Activated B cell treated with CpG ODN at 0.5 μM for 24 hours (primary cell): ENCODE measurements at regions of chrX and their contacts with region 1.

Region 1: GRCh38 chrX:136251041-136251991 is at the start of gene MAP7D3:
- DNase-seq: peak; percentile 61
- ATAC-seq: peak; percentile 93
- H3K4me3 Mint-ChIP-seq: peak within 1 kb of the TSS; percentile 86
- H3K27ac Mint-ChIP-seq: peak within 1 kb of the TSS; percentile 81
- H3K4me1 Mint-ChIP-seq: peaks cover 6% of the 10 kb centered on the region
- H3K27me3 Mint-ChIP-seq: no peaks in the 10 kb centered on the region
- CTCF ChIP-seq: no peak
- total RNA-seq, gene MAP7D3: 11.2 and 12.2 TPM in 2 replicates

Region 2: GRCh38 chrX:135985141-135985972 is 266.0 kb before region 1 on chrX and contains the start of gene SLC9A6:
- CTCF ChIA-PET with region 1: no interaction called
- POLR2A ChIA-PET with region 1: no interaction called
- intact Hi-C with region 1: loop called (anchors 1 kb)
- DNase-seq: peak; percentile 64
- ATAC-seq: peak; percentile 93
- H3K4me3 Mint-ChIP-seq: peak within 1 kb of the TSS; percentile 91
- H3K27ac Mint-ChIP-seq: peak within 1 kb of the TSS; percentile 84
- H3K4me1 Mint-ChIP-seq: peaks cover 43% of the 10 kb centered on the region
- H3K27me3 Mint-ChIP-seq: no peaks in the 10 kb centered on the region
- CTCF ChIP-seq: no peak
- total RNA-seq, gene SLC9A6: 13.5 and 16.7 TPM in 2 replicates

Region 3: DNA sequence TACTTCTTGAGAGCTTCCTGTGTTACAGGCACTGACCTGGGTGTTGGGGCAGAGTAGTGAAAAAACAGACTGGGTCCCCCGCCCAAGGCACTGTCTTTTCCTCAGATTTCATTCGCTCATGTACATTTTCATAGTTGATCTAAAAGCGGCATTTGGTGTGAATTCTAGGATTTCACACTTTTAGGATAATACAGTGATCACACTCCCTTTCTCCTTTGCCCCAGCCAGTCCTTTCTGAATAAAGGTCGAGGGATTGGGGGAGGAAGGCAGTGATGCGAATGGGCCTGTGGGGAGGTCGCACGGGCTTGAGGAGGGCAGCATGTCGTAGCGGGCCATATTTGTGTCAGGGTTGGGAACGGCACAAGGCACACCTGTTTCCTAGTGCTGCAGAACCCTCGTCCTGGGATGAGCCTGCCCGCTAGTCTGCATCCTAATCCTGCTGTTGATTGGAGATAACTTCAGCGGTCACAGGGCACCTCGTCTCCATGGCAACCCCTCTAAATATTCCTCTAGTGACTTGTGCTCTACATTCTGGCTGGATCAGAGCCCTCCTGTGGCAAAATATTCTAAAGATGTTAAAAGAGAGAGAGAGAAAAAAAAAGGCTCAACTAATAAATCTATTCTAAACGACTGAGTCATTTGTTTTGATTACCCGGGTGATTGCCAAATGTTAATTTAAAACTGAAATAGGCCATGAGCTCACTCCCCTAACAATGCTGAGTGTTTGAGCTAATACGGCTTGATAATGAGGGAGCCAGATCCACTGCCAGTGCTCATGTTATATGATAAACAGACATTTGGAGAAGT is 82.2 kb before region 1 on chrX:
- CTCF ChIA-PET with region 1: no interaction called
- POLR2A ChIA-PET with region 1: no interaction called
- intact Hi-C with region 1: no loop called
- DNase-seq: no peak
- ATAC-seq: no peak
- H3K4me3 Mint-ChIP-seq: no peak overlapping the region
- H3K27ac Mint-ChIP-seq: no peak overlapping the region
- H3K4me1 Mint-ChIP-seq: no peaks in the 10 kb centered on the region
- H3K27me3 Mint-ChIP-seq: no peaks in the 10 kb centered on the region
- CTCF ChIP-seq: no peak

Region 4: GRCh38 chrX:136214551-136214950 is 36.8 kb before region 1 on chrX:
- CTCF ChIA-PET with region 1: no interaction called
- POLR2A ChIA-PET with region 1: no interaction called
- intact Hi-C with region 1: loop called (anchors 5 kb)
- DNase-seq: no peak
- ATAC-seq: no peak
- H3K4me3 Mint-ChIP-seq: no peak overlapping the region
- H3K27ac Mint-ChIP-seq: no peak overlapping the region
- H3K4me1 Mint-ChIP-seq: peaks cover 31% of the 10 kb centered on the region
- H3K27me3 Mint-ChIP-seq: no peaks in the 10 kb centered on the region
- CTCF ChIP-seq: no peak

Region 5: DNA sequence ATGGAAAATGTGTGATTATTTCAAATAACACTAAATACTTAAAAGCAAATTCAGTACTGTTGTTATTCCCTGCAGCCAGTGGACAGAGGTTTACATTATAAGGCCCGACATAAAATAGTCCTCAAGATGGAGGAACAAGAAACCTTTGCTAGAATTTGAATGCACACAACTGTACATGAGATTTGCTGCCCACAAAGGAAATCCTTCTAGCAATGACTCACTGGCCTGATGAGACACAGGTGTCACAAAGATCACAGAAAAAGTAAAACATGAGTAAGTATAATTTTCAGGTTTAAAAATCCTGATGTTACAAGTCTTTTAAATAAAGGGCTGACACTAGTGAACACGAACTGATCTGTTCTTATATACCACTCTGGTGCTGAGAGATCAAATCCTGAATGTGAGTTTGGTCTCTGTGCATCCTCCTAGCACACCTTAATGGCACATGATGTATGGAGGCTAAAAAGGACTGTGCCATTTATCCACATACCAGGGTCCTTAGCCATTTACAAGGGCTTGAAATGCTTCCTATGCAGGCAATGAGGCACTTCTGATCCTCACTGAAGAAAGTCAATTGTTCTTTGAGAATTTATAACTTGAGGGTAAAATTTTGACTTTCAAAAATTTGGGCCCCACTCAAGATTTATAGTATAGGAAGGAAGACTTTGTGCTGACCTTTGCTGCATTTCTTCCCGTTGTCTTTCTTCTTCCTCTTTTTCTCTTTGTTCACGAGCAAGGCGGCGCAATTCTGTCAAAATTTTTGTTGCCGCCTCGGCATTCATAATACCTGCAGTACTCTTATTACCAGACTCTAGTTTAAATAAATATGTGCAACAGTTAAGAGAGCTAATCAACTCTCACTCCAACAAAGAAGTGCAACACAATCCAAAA is 23.1 kb before region 1 on chrX:
- CTCF ChIA-PET with region 1: no interaction called
- POLR2A ChIA-PET with region 1: no interaction called
- intact Hi-C with region 1: loop called (anchors 1 kb)
- DNase-seq: no peak
- ATAC-seq: peak; percentile 62
- H3K4me3 Mint-ChIP-seq: peak overlapping the region; percentile 68
- H3K27ac Mint-ChIP-seq: peak overlapping the region; percentile 87
- H3K4me1 Mint-ChIP-seq: peaks cover 33% of the 10 kb centered on the region
- H3K27me3 Mint-ChIP-seq: no peaks in the 10 kb centered on the region
- CTCF ChIP-seq: no peak

Region 6: DNA sequence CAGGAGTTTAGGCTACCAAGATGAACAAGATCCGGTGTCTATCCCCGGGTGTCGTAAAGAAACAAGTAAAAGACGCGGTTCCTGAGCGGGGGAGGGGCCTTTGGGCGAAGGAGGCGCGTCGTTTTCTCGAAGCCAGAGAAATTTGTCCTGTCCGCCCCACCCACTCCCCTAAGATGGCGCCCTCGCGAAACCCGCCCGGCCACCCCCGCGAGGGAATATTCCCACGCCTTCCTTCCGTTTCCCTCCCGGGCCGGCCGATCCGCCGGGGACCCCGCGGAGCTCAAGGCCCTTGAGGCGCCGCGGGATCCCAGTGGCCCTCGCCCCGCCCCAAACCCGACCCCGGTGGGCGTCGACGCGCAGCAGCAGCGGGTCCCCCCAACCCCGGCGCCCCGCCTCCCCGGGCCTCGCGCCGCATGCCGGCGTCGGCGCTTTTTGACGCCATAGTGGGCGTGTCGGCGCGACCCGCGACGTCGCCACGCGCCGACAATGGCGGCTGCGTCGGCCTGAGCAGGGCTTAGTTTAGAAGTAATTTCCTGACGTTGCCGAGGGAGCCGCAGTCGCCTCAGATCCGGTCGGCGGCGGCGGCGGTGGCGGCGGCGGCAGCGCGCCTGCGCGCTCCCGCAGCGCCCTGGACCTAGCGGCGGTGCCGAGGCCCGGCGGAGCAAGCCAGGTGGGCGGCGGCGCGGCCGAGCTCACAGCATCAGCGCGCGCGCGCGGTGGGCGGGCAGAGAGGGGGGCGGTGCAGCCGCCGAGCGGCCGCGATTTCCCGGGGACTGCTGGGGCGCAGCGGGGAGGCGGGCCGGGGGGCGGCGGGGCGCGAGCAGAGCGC is 245.7 kb after region 1 on chrX and contains the start of gene HTATSF1:
- CTCF ChIA-PET with region 1: no interaction called
- POLR2A ChIA-PET with region 1: no interaction called
- intact Hi-C with region 1: loop called (anchors 1 kb)
- DNase-seq: peak; percentile 79
- ATAC-seq: peak; percentile 81
- H3K4me3 Mint-ChIP-seq: peak within 1 kb of the TSS; percentile 89
- H3K27ac Mint-ChIP-seq: peak within 1 kb of the TSS; percentile 97
- H3K4me1 Mint-ChIP-seq: peaks cover 22% of the 10 kb centered on the region
- H3K27me3 Mint-ChIP-seq: no peaks in the 10 kb centered on the region
- CTCF ChIP-seq: no peak
- total RNA-seq, gene HTATSF1: 23.9 and 24.5 TPM in 2 replicates